ENCODE measurements at regions of chr9 and their contacts with region 1.

Region 1: GRCh38 chr9:129413537-129414376 is 207.1 kb downstream of the C9orf50 start:
- DNase-seq: peak; percentile 89
- H3K4me3 ChIP-seq: peak overlapping the region; percentile 59 to 66 (median 59)
- H3K27ac ChIP-seq: peak overlapping the region; percentile 97
- H3K4me1 ChIP-seq: peaks cover 16% of the 10 kb centered on the region
- H3K27me3 ChIP-seq: no peaks in the 10 kb centered on the region
- CTCF ChIP-seq: no peak

Region 2: GRCh38 chr9:129080602-129081387 is 333.0 kb before region 1 on chr9 and contains the start of gene DOLPP1:
- CTCF ChIA-PET with region 1: no interaction called
- dilution Hi-C with region 1: no loop called
- in situ Hi-C with region 1: no loop called
- intact Hi-C with region 1: no loop called
- DNase-seq: peak; percentile 100
- H3K4me3 ChIP-seq: peak within 1 kb of the TSS; percentile 82 to 89 (median 88)
- H3K27ac ChIP-seq: peak within 1 kb of the TSS; percentile 41
- H3K4me1 ChIP-seq: peaks cover 17% of the 10 kb centered on the region
- H3K27me3 ChIP-seq: no peaks in the 10 kb centered on the region
- CTCF ChIP-seq: no peak
- total RNA-seq, gene DOLPP1: 11.3 to 20.1 TPM

Region 3: GRCh38 chr9:129495534-129496325 is 82.0 kb after region 1 on chr9:
- CTCF ChIA-PET with region 1: no interaction called
- dilution Hi-C with region 1: no loop called
- in situ Hi-C with region 1: no loop called
- intact Hi-C with region 1: loop called (anchors 2 kb)
- DNase-seq: peak; percentile 63
- H3K4me3 ChIP-seq: peak overlapping the region; percentile 51 to 61 (median 51)
- H3K27ac ChIP-seq: peak overlapping the region; percentile 45
- H3K4me1 ChIP-seq: peaks cover 16% of the 10 kb centered on the region
- H3K27me3 ChIP-seq: no peaks in the 10 kb centered on the region
- CTCF ChIP-seq: no peak

Measured in mammary epithelial cell (primary cell).